Activated CD4-positive, alpha-beta T cell treated with anti-CD3 and anti-CD28 coated beads for 36 hours (primary cell): ENCODE measurements at regions of chr11 and their contacts with region 1.

Region 1: DNA sequence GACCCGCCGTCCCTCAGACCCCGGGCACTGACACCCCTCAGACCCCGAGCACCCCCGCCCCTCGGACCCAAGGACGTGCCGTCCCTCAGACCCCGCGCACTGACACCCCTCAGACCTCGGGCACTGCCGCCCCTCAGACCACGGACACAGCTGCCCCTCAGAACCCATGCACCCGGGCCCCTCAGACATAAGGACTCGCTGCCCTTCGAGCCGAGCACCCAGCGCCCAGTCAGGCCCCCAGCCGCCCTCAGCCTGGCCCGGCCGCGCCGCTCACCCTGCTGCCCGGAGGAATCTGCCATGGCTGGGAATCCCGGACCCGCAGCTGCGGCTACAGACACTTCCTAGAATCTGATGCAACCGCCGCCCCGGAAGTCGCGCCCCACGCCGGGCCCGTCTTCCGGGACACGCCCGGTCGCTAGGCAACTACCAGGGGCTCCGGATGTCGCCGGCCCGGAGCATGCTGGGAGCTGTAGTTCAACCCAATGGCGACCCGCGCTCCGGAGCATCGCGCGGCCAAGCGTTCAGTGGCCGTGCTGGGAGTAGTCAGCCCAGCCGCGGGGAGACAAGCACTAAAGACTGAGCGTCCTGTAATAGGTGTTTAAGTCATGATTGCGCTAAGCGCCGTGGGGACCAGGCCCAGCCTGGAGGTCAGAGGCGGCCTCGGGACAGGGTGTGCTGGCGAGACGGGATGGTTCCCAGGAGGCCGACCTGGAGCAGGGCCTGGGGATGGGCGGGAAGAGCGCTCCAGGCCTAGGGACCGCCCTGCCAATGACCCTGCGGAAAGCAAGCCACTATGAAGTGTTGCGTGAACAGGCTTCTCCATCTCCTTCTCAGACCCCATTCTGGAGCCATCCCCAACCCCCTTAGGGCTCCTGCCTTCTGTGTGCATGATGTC is at the start of gene CARS1:
- DNase-seq: peak; percentile 98
- ATAC-seq: peak; percentile 99
- H3K4me3 Mint-ChIP-seq: peak within 1 kb of the TSS; percentile 89
- H3K27ac Mint-ChIP-seq: peak within 1 kb of the TSS; percentile 87
- H3K4me1 Mint-ChIP-seq: peaks cover 29% of the 10 kb centered on the region
- H3K27me3 Mint-ChIP-seq: no peaks in the 10 kb centered on the region
- total RNA-seq, gene CARS1: 94.1 to 126 TPM

Region 2: GRCh38 chr11:2699531-2700414 is 357.5 kb before region 1 on chr11 and contains the start of gene KCNQ1OT1:
- CTCF ChIA-PET with region 1: no interaction called
- POLR2A ChIA-PET with region 1: no interaction called
- intact Hi-C with region 1: loop called in 1 of 2 experiments (anchors 1 kb)
- DNase-seq: peak; percentile 91
- ATAC-seq: peak; percentile 98
- H3K4me3 Mint-ChIP-seq: peak within 1 kb of the TSS; percentile 79
- H3K27ac Mint-ChIP-seq: peak within 1 kb of the TSS; percentile 28
- H3K4me1 Mint-ChIP-seq: peaks cover 8% of the 10 kb centered on the region
- H3K27me3 Mint-ChIP-seq: no peaks in the 10 kb centered on the region
- total RNA-seq, gene KCNQ1OT1: 0.16 TPM

Region 3: DNA sequence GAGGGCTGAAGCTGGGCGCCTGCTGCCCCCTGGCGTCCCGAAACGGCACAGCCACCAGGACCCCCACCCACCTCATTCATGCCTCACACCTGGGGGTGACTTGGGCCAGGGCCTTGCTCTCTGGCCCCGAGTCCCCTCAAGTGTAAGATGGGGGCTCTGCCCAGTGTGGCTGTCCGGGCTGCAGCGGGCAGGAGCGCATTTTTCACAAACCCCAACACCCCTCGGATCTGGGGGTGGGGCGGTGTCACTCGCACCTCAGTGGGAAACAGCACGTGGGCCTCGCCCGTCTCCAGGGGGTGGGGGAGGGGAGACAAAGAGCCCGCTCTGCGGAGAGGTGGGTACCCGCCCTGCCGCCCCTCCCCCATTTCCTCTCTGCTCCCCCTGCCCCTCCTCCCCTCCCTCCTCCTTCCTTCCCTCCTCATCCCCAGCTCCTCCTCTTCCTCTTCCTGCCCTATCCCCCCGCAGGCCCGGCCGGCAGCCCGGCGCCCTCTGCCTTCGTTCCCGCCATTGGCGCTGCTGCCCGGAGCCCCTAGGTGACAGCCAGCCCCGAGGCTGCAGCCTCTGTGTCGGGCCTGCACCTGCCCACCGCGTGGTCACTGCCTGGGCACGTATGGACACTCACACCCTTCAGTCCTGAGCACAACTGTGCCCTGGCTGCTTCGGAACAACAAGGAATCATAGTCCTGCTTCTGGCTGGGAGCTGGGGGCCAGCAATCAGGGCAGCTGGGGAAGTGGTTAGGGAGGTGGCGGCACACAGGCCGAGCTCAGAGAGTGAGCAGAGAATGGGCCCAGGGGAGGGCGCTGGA is 164.9 kb before region 1 on chr11:
- CTCF ChIA-PET with region 1: no interaction called
- POLR2A ChIA-PET with region 1: no interaction called
- intact Hi-C with region 1: loop called in 1 of 2 experiments (anchors 2 kb)
- DNase-seq: peak; percentile 85
- ATAC-seq: peak; percentile 69
- H3K4me3 Mint-ChIP-seq: peak overlapping the region; percentile 75
- H3K27ac Mint-ChIP-seq: peak overlapping the region; percentile 80
- H3K4me1 Mint-ChIP-seq: peaks cover 18% of the 10 kb centered on the region
- H3K27me3 Mint-ChIP-seq: no peaks in the 10 kb centered on the region

Region 4: GRCh38 chr11:2901854-2902783 is 155.2 kb before region 1 on chr11:
- CTCF ChIA-PET with region 1: no interaction called
- POLR2A ChIA-PET with region 1: no interaction called
- intact Hi-C with region 1: loop called in 1 of 2 experiments (anchors 1 kb)
- DNase-seq: peak; percentile 98
- ATAC-seq: peak; percentile 96
- H3K4me3 Mint-ChIP-seq: peak overlapping the region; percentile 64
- H3K27ac Mint-ChIP-seq: peak overlapping the region; percentile 22
- H3K4me1 Mint-ChIP-seq: peaks cover 33% of the 10 kb centered on the region
- H3K27me3 Mint-ChIP-seq: no peaks in the 10 kb centered on the region

Region 5: GRCh38 chr11:2930704-2931428 is 126.5 kb before region 1 on chr11:
- CTCF ChIA-PET with region 1: no interaction called
- POLR2A ChIA-PET with region 1: no interaction called
- intact Hi-C with region 1: loop called in 1 of 2 experiments (anchors 1 kb)
- DNase-seq: peak; percentile 80
- ATAC-seq: peak; percentile 28
- H3K4me3 Mint-ChIP-seq: peak overlapping the region; percentile 61
- H3K27ac Mint-ChIP-seq: peak overlapping the region; percentile 47
- H3K4me1 Mint-ChIP-seq: peaks cover 27% of the 10 kb centered on the region
- H3K27me3 Mint-ChIP-seq: peaks cover 19% of the 10 kb centered on the region

Region 6: GRCh38 chr11:3378426-3379423 is 321.4 kb after region 1 on chr11 and contains the start of gene ZNF195:
- CTCF ChIA-PET with region 1: no interaction called
- POLR2A ChIA-PET with region 1: no interaction called
- intact Hi-C with region 1: loop called in 1 of 2 experiments (anchors 1 kb)
- DNase-seq: peak; percentile 99
- ATAC-seq: peak; percentile 100
- H3K4me3 Mint-ChIP-seq: peak within 1 kb of the TSS; percentile 91
- H3K27ac Mint-ChIP-seq: peak within 1 kb of the TSS; percentile 93
- H3K4me1 Mint-ChIP-seq: peaks cover 47% of the 10 kb centered on the region
- H3K27me3 Mint-ChIP-seq: no peaks in the 10 kb centered on the region
- total RNA-seq, gene ZNF195: 32.6 to 36.2 TPM

Region 7: DNA sequence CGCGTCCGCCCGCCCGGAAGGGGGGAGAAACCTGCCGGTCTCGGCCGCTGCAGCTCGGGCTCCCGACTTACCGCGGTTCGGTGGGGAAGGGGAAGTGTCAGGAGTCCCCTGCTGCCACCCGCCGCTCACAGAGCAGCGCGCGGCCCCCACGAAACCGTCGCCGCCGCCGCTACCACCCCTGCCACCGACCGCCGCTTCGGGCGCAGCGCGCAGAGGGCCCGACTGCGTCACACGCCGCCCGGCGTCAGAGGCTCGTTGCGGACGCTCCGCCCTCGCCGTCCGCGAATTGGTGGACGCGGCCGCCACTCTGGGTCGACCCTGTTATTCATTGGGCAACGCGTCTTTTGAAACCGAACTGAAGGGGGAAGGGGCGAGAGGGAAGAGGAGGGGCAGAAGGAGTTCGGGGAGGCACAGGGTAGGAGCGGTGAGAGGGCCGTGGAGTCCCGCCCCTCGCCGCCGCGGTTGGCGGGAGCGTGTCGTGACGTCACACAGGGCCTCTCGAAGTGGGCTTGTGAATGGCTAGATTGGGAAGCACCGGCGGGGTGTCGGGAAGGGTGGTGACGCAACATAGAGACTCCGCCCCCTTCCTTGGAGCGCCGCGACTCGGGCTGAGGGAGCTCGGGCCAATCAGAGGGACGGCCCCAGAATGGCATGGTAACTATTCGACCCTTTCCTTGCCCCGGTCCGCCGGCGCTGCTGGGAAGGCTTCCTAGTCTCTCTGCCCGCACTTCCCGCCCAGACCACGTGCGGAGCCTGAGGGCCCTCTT is 740.2 kb after region 1 on chr11 and contains the start of gene NUP98:
- CTCF ChIA-PET with region 1: no interaction called
- POLR2A ChIA-PET with region 1: no interaction called
- intact Hi-C with region 1: loop called in 1 of 2 experiments (anchors 5 kb)
- DNase-seq: peak; percentile 100
- ATAC-seq: peak; percentile 98
- H3K4me3 Mint-ChIP-seq: peak within 1 kb of the TSS; percentile 99
- H3K27ac Mint-ChIP-seq: peak within 1 kb of the TSS; percentile 100
- H3K4me1 Mint-ChIP-seq: peaks cover 39% of the 10 kb centered on the region
- H3K27me3 Mint-ChIP-seq: no peaks in the 10 kb centered on the region
- total RNA-seq, gene NUP98: 96.0 to 134 TPM

Region 8: GRCh38 chr11:3989276-3989920 is 932.1 kb after region 1 on chr11:
- CTCF ChIA-PET with region 1: no interaction called
- POLR2A ChIA-PET with region 1: no interaction called
- intact Hi-C with region 1: no loop called
- DNase-seq: no peak
- ATAC-seq: no peak
- H3K4me3 Mint-ChIP-seq: peak overlapping the region; percentile 53
- H3K27ac Mint-ChIP-seq: peak overlapping the region; percentile 74
- H3K4me1 Mint-ChIP-seq: peaks cover 63% of the 10 kb centered on the region
- H3K27me3 Mint-ChIP-seq: no peaks in the 10 kb centered on the region